ENCODE measurements at regions of chr5 and their contacts with region 1.

Region 1: DNA sequence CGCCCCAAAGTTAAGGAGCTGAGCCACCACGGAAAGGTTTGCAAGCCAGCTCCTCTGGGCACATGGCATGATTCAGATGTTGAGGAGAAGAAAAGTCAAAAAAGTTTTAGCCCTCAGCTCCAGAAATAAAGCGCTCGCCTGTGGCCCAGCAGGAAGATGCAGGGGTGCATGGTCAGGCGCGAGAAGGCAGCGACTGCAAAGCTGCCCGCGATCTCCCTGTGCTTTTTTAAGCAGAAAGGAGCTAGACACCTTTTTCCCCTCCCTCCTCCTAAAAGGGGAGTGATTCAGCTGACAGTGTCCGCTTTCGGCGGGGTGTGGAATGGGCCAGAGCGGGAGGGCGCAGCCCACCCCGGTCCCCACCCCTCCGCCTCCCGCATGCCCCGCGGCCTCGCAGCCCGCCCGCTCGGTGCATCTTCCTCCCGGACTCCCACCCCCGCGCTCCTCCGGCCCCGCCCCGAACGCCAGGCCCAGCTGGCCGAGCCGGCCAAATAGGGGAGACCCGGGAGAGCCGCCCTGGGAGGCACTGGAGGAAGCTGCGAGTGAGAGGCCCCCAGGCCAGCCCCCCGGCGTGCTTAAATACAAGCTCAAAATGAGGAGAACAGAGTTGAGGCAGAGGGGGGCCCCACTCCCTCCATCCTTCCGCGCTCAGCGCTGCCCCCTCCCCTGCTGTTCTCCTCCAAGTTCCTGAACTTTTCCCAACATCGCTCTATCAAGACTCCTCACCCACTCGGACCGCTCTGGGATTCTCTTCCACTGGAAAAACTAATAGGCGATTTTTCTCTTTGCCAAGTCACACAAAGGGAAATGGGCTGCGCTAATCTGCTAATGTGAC is at the start of gene ADAMTS12:
- DNase-seq: peak; percentile 77
- ATAC-seq: peak; percentile 74
- H3K4me3 ChIP-seq: peak within 1 kb of the TSS; percentile 57
- H3K27ac ChIP-seq: peak within 1 kb of the TSS; percentile 85
- H3K4me1 ChIP-seq: peaks cover 17% of the 10 kb centered on the region
- H3K27me3 ChIP-seq: no peaks in the 10 kb centered on the region
- CTCF ChIP-seq: no peak
- POLR2A ChIP-seq: no peak
- RAD21 ChIP-seq: no peak
- total RNA-seq, gene ADAMTS12: 49.2 and 51.3 TPM in 2 replicates

Region 2: GRCh38 chr5:33440482-33441240 is 451.3 kb before region 1 on chr5 and contains the start of gene TARS1:
- CTCF ChIA-PET with region 1: no interaction called
- POLR2A ChIA-PET with region 1: no interaction called
- dilution Hi-C with region 1: no loop called
- in situ Hi-C with region 1: no loop called
- intact Hi-C with region 1: loop called (anchors 5 kb)
- DNase-seq: peak; percentile 100
- ATAC-seq: peak; percentile 94
- H3K4me3 ChIP-seq: peak within 1 kb of the TSS; percentile 68
- H3K27ac ChIP-seq: peak within 1 kb of the TSS; percentile 97
- H3K4me1 ChIP-seq: peaks cover 2% of the 10 kb centered on the region; the same call in 1 of the 2 replicates
- H3K27me3 ChIP-seq: no peaks in the 10 kb centered on the region
- CTCF ChIP-seq: no peak
- POLR2A ChIP-seq: peak; percentile 91
- RAD21 ChIP-seq: no peak
- total RNA-seq, gene TARS1: 175 and 219 TPM in 2 replicates

Region 3: DNA sequence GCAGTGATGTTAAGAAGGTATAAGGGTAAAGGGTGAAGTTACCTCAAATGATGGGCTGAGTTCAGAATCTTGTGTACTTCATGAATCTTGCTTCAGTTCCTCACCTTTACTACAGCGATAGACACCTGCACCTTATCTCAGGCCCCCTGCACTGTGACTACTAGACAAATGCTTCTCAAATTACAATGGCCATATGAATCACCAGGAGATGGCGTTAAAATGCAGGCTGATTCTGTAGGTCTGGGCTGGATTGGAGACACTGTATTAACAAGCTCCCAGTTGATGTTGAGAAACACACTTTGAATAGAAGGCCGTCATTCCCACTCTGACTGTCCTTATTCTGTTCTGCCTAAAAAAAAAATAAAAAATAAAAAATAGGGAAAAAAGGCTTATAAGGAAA is 421.5 kb before region 1 on chr5:
- CTCF ChIA-PET with region 1: no interaction called
- POLR2A ChIA-PET with region 1: no interaction called
- dilution Hi-C with region 1: no loop called
- in situ Hi-C with region 1: no loop called
- intact Hi-C with region 1: loop called (anchors 5 kb)
- DNase-seq: peak; percentile 60
- ATAC-seq: peak; percentile 68
- H3K4me3 ChIP-seq: no peak overlapping the region
- H3K27ac ChIP-seq: no peak overlapping the region
- H3K4me1 ChIP-seq: no peaks in the 10 kb centered on the region
- H3K27me3 ChIP-seq: no peaks in the 10 kb centered on the region
- CTCF ChIP-seq: peak; percentile 46
- POLR2A ChIP-seq: no peak
- RAD21 ChIP-seq: peak; percentile 60

Region 4: DNA sequence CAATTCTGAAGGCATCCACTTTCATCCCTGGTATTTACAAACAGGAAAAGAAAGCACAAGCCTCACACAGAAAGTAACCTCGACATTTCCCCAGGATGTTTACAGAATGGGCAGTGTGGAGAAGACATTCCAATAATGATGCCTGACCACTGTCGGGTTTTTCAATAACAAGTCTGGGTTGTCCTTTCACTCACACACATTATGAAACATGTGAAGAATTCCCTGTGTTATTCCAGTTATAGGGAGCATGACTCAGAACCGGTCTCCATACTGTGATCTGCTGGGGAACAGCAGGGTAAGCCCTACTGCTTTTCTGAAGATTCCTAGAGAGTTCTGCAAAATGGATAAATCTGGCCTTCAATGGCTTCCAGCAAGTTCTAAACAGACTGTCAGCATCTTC is 155.5 kb before region 1 on chr5:
- CTCF ChIA-PET with region 1: no interaction called
- POLR2A ChIA-PET with region 1: no interaction called
- dilution Hi-C with region 1: no loop called
- in situ Hi-C with region 1: no loop called
- intact Hi-C with region 1: loop called (anchors 5 kb)
- DNase-seq: peak; percentile 95
- ATAC-seq: peak; percentile 95
- H3K4me3 ChIP-seq: no peak overlapping the region
- H3K27ac ChIP-seq: peak overlapping the region; percentile 28; the same call in 1 of the 2 replicates
- H3K4me1 ChIP-seq: peaks cover 13% of the 10 kb centered on the region
- H3K27me3 ChIP-seq: no peaks in the 10 kb centered on the region
- CTCF ChIP-seq: no peak
- POLR2A ChIP-seq: no peak
- RAD21 ChIP-seq: 0 out of 2 replicates have a peak, but pooled peaks have one; percentile 4

Region 5: GRCh38 chr5:33850100-33850594 is 41.9 kb before region 1 on chr5:
- CTCF ChIA-PET with region 1: no interaction called
- POLR2A ChIA-PET with region 1: interaction called, 5 read pairs
- dilution Hi-C with region 1: no loop called
- in situ Hi-C with region 1: no loop called
- intact Hi-C with region 1: loop called (anchors 5 kb)
- DNase-seq: peak; percentile 75
- ATAC-seq: no peak
- H3K4me3 ChIP-seq: no peak overlapping the region
- H3K27ac ChIP-seq: no peak overlapping the region
- H3K4me1 ChIP-seq: peaks cover 28% of the 10 kb centered on the region
- H3K27me3 ChIP-seq: no peaks in the 10 kb centered on the region
- CTCF ChIP-seq: no peak
- POLR2A ChIP-seq: no peak
- RAD21 ChIP-seq: no peak

Region 6: GRCh38 chr5:33936004-33936380 is 44.0 kb after region 1 on chr5:
- CTCF ChIA-PET with region 1: interaction called, 7 read pairs
- POLR2A ChIA-PET with region 1: interaction called, 4 read pairs
- dilution Hi-C with region 1: no loop called
- in situ Hi-C with region 1: no loop called
- intact Hi-C with region 1: loop called (anchors 2 kb)
- DNase-seq: peak; percentile 54
- ATAC-seq: peak; percentile 90
- H3K4me3 ChIP-seq: peak overlapping the region; percentile 56
- H3K27ac ChIP-seq: no peak overlapping the region
- H3K4me1 ChIP-seq: no peaks in the 10 kb centered on the region
- H3K27me3 ChIP-seq: peaks cover 42% of the 10 kb centered on the region
- CTCF ChIP-seq: no peak
- POLR2A ChIP-seq: no peak
- RAD21 ChIP-seq: 0 out of 2 replicates have a peak, but pooled peaks have one; percentile 15

Region 7: DNA sequence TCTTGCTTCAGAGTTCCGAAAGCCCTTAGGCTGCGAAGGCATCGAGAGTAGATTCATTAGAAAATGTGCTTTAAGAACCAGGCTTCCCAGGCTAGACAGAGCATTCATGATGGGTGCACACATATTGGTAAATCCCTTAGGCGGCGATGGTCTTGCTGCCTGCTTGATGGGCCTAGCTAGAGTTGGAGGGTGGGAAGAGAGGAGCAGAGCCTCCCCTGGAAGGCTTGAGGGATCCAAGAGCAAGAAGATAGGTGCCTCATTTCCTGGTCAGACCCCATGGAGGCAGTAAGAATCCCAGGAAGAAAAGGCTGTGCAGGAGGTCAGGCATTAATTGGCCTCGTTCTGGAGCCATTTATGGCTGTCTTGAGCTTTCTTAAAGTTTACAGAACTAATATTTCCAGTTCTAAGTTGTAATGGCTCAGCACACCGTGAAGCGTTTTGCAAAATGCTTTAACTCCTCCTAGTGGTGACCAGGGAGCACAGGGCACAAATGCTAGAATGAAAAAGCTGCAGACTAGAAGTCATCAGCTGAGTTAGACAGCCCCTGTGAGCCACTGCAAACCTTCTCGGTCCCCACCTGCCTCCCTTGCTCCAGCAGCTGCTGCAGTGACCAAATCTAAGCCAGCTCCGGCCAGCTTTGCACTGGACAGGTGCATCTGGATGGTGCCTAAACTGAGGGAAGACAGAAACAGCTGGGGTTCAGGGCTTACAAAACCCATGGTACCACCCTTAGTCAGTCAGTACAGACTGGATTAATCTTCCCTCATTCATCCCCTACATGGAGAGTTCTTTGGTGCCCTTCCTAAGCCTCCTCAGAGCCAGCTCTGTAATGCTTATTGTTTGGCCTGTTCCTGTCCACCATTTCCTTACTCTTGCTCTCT is 77.8 kb after region 1 on chr5:
- CTCF ChIA-PET with region 1: interaction called, 4 read pairs
- POLR2A ChIA-PET with region 1: no interaction called
- dilution Hi-C with region 1: no loop called
- in situ Hi-C with region 1: no loop called
- intact Hi-C with region 1: loop called (anchors 5 kb)
- DNase-seq: peak; percentile 71
- ATAC-seq: peak; percentile 98
- H3K4me3 ChIP-seq: no peak overlapping the region
- H3K27ac ChIP-seq: no peak overlapping the region
- H3K4me1 ChIP-seq: peaks cover 1% of the 10 kb centered on the region; the same call in 1 of the 2 replicates
- H3K27me3 ChIP-seq: peaks cover 6% of the 10 kb centered on the region
- CTCF ChIP-seq: peak; percentile 84
- POLR2A ChIP-seq: no peak
- RAD21 ChIP-seq: peak; percentile 93